Right ventricle myocardium inferior (tissue), 1 donor: ENCODE measurements at regions of chr5 and their contacts with region 1.

Region 1: GRCh38 chr5:181243512-181244343 is at the start of gene RACK1:
- DNase-seq: peak; percentile 92
- ATAC-seq: peak; percentile 78
- total RNA-seq, gene RACK1: 693 TPM

Region 2: DNA sequence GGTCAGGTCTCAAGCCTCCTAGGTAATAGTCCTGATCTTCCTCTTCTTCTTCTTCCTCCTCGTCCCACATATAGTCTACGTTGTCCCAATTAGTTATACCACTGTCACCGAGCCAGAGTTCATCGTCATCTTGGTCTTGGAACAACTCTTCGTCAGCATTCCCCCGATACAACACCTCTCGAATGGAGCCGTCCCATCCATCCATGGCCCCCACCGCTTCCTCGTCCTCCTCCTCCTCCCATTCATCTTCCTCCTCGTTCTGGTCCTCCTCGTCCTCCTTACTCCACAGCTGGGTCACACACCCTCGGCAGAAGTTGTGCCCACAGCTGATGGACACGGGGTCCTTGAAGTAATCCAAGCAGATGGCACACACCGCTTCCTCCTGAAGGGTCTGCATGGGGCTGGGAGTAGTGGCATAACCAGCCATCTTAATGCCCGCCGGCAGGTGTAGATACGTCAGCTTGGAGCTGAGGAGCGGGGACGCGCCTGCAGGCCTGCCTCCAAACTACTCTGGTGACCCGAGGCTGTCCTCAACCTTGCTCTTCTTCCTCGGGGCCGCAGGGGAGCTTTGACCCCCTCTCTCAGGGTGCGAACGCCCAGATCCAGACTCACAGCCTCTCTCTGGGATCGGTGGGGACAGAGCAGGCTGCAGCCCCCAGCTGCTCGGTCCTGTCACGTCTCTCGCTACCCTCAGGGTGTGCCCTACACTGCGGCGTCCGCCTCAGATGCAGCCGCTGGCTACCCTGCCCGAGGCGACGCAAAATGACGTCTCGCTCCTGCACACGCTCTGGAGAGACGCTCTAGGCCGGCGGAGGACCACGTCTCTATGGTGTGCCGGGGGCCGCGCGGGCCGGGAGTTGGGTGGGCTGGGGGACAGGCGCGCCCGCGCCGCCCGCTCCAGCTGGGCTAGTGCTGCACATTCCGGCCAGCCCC is 16.9 kb after region 1 on chr5 and contains the start of gene TRIM52:
- intact Hi-C with region 1: loop called (anchors 1 kb)
- DNase-seq: peak; percentile 97
- ATAC-seq: peak; percentile 94
- total RNA-seq, gene TRIM52: 9.2 TPM